HCT116 (cell line): ENCODE measurements at regions of chr11 and their contacts with region 1.

Region 1: DNA sequence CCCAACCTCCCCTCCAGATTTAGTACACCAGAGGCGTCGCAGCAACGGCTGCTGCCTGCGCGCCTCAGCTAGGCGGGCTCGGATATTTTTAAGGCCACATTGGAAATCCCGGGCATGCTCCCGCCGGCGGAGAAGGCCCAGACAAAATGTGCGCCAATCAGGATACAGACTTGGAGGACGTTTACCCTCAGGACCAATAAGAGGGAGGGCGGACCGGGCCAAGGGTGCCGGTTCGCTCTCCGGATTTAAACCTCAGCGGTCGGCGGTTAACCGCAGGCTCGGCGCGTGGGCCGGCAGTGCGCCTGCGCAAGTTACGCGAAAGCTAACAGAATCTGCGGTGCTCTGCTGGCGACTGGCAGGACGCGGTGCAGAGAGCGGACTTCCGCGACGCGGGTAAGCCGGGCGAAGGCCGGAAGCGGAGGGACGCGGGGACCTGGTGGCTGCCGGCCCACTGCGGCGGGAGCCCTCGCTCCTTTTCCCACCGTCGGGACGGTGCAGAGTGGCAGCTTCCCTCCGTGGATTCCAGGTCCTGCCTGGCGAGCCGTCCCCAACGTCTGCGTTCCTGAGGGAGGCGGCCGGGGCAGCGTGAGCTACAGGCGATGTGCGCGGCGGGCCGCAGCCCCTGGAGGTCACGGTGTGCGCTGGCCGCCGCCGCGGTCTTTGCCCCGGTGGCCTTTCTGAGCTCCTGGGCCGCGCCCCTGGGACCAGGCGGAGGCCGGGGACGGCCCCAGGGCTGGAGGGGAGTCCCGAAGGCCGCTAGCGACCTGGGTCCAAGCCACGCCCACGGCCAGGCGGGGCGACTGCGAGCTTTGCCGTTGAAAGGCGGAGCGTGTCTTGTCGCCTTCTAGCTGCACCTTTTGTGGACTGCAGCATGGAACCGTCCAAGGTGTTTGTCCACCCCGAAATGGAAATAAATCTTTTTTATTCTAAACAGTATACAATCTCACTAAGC is at the start of gene HYLS1:
- DNase-seq: peak; percentile 92
- ATAC-seq: peak; percentile 87
- H3K4me3 ChIP-seq: peak within 1 kb of the TSS; percentile 64 to 81
- H3K27ac ChIP-seq: peak within 1 kb of the TSS; percentile 91
- H3K4me1 ChIP-seq: peaks cover 4 to 25% of the 10 kb centered on the region in 2 experiments; a peak in 3 of 4 replicates
- H3K27me3 ChIP-seq: no peaks in the 10 kb centered on the region
- CTCF ChIP-seq: peak in 1 of 3 experiments; percentile 41; a peak in 1 of 6 replicates
- POLR2A ChIP-seq: peak; percentile 74
- RAD21 ChIP-seq: no peak
- total RNA-seq, gene HYLS1: 18.9 TPM

Region 2: GRCh38 chr11:125618383-125618782 is 269.3 kb before region 1 on chr11:
- CTCF ChIA-PET with region 1: no interaction called
- POLR2A ChIA-PET with region 1: no interaction called
- RAD21 ChIA-PET with region 1: no interaction called
- intact Hi-C with region 1: no loop called
- DNase-seq: no peak
- ATAC-seq: no peak
- H3K4me3 ChIP-seq: no peak overlapping the region
- H3K27ac ChIP-seq: no peak overlapping the region
- H3K4me1 ChIP-seq: no peaks in the 10 kb centered on the region
- H3K27me3 ChIP-seq: no peaks in the 10 kb centered on the region
- CTCF ChIP-seq: no peak
- POLR2A ChIP-seq: no peak
- RAD21 ChIP-seq: no peak

Region 3: DNA sequence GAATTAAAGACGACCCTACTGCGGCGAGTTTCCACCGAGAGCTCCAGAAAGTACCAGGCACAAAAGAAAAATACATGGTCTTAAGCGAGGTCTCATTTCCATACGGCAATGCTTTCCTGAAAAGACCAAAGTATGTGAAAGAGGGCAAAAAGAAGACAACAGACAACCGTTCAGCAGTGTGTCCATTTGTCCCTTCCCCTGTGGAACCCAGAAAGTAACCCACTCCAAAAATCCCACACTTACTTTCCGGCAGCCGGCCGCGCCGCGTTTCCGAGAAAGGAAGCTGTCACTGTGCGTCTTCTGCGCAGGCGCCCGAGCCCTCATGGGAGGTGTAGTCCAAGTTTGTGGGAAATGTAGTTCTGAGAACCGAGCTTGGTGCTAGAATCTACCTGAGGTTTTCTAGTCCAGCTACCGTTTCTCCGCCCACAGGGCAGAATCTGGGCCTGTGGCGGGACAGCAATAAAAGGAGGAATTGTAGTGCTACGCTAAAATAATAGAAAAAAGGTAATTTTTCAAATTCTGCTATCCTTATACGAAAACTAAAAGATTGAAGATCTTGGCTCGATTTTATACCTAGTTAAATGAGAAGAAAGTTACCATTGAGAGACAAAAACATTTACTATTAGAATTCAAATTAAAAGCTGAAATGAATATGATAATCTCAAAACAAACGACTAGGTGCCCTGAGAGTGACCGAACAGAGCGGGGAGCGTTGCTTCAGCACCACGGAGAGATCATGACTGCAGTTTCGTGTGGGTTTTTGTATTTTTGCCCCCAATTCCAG is 15.5 kb after region 1 on chr11 and contains the start of gene PUS3:
- CTCF ChIA-PET with region 1: interaction called, 4 read pairs
- POLR2A ChIA-PET with region 1: interaction called, 13 read pairs
- RAD21 ChIA-PET with region 1: no interaction called
- intact Hi-C with region 1: no loop called
- DNase-seq: peak; percentile 73
- ATAC-seq: peak; percentile 97
- H3K4me3 ChIP-seq: peak within 1 kb of the TSS; percentile 63 to 82
- H3K27ac ChIP-seq: peak within 1 kb of the TSS; percentile 65
- H3K4me1 ChIP-seq: peaks cover 3 to 8% of the 10 kb centered on the region in 2 experiments; a peak in 2 of 4 replicates
- H3K27me3 ChIP-seq: peaks cover 8% of the 10 kb centered on the region; the same call in 1 of the 2 replicates
- CTCF ChIP-seq: no peak
- POLR2A ChIP-seq: peak; percentile 66
- RAD21 ChIP-seq: no peak
- total RNA-seq, gene PUS3: 11.9 TPM